Posterior cingulate gyrus (tissue), 11 donors: ENCODE measurements at regions of chr2 and their contacts with region 1.

Region 1: GRCh38 chr2:20609349-20609994 is 41.4 kb downstream of the HS1BP3 start:
- DNase-seq: peak in 7 of 10 donors; percentile 16 to 87 (median 44)

Region 2: GRCh38 chr2:20516646-20517341 is 92.7 kb before region 1 on chr2:
- intact Hi-C with region 1: loop called (anchors 10 kb)
- DNase-seq: peak in 8 of 10 donors; percentile 51 to 95 (median 70)

Region 3: GRCh38 chr2:20595431-20596192 is 13.9 kb before region 1 on chr2:
- intact Hi-C with region 1: no loop called
- DNase-seq: peak in 3 of 10 donors; percentile 16 to 82 (median 82)

Region 4: GRCh38 chr2:20698916-20699613 is 89.6 kb after region 1 on chr2:
- intact Hi-C with region 1: no loop called
- DNase-seq: no peak